ENCODE measurements at regions of chr5 and their contacts with region 1.

Region 1: DNA sequence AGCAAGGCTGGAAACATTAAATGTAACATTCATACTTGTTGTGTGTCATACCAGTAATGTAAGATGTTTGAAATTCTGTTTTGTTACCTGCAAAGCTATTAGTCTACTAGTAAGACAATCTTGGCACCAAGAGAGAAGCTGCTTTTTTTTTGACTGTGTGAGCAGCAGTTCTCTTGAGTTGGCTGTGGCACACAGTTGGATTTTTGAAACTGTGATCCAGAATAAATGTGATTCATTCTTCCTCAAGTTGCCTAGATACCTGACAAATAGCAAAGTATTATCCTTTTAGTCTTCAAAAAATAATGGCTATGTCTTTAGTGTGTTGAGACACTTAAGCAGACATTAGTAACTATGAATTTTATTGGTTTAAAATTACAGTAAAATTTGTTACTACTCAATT is 57.2 kb upstream of the HAPLN1 start:
- DNase-seq: peak; percentile 20
- H3K4me3 ChIP-seq: no peak overlapping the region
- H3K27ac ChIP-seq: peak overlapping the region; percentile 16
- H3K4me1 ChIP-seq: peaks cover 27% of the 10 kb centered on the region
- H3K27me3 ChIP-seq: no peaks in the 10 kb centered on the region
- CTCF ChIP-seq: no peak
- POLR2A ChIP-seq: no peak

Region 2: DNA sequence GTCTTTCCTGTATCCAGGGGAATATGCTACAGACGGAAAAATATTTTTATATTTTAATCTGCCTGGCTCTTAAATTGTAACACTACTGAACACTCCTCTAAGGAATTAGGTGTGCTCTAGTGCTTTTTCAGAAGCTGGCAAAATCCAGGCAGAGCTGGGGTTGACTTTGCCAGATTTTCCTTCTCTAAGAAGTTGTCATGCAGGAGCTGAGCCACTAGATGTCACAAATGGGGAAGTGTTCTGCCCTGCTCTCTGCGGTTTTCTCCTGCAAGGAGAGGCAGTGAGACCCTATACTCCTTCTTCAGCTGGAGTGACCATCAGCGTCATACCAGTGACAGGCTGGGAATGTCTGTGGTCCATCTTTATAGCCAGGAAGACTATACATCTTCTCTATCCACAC is 169.7 kb before region 1 on chr5:
- CTCF ChIA-PET with region 1: no interaction called
- POLR2A ChIA-PET with region 1: no interaction called
- dilution Hi-C with region 1: no loop called
- intact Hi-C with region 1: no loop called
- DNase-seq: peak; percentile 55
- H3K4me3 ChIP-seq: no peak overlapping the region
- H3K27ac ChIP-seq: no peak overlapping the region
- H3K4me1 ChIP-seq: no peaks in the 10 kb centered on the region
- H3K27me3 ChIP-seq: no peaks in the 10 kb centered on the region
- CTCF ChIP-seq: peak; percentile 26 to 70
- POLR2A ChIP-seq: no peak

Region 3: DNA sequence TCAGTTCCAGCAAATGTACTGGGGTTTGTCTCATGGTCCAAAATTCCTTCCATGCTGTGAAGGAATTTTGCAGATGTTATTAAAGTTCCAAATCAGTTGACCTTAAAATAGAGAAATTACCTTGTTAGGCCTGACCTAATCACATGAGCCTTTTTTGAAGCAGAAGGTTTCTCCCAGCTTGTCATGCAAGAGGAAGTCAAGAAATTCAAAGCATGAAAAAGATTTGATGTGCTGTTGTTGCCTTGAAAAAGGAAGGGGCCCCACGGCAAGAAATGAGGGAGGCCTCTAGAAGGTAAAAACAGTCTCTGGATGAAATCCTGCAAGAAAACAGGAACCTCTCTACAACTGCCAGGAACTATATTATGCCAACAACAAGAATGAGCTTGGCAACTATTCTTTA is 33.0 kb before region 1 on chr5:
- CTCF ChIA-PET with region 1: no interaction called
- POLR2A ChIA-PET with region 1: no interaction called
- dilution Hi-C with region 1: no loop called
- intact Hi-C with region 1: no loop called
- DNase-seq: peak; percentile 79
- H3K4me3 ChIP-seq: no peak overlapping the region
- H3K27ac ChIP-seq: no peak overlapping the region
- H3K4me1 ChIP-seq: no peaks in the 10 kb centered on the region
- H3K27me3 ChIP-seq: no peaks in the 10 kb centered on the region
- CTCF ChIP-seq: no peak
- POLR2A ChIP-seq: no peak

Region 4: DNA sequence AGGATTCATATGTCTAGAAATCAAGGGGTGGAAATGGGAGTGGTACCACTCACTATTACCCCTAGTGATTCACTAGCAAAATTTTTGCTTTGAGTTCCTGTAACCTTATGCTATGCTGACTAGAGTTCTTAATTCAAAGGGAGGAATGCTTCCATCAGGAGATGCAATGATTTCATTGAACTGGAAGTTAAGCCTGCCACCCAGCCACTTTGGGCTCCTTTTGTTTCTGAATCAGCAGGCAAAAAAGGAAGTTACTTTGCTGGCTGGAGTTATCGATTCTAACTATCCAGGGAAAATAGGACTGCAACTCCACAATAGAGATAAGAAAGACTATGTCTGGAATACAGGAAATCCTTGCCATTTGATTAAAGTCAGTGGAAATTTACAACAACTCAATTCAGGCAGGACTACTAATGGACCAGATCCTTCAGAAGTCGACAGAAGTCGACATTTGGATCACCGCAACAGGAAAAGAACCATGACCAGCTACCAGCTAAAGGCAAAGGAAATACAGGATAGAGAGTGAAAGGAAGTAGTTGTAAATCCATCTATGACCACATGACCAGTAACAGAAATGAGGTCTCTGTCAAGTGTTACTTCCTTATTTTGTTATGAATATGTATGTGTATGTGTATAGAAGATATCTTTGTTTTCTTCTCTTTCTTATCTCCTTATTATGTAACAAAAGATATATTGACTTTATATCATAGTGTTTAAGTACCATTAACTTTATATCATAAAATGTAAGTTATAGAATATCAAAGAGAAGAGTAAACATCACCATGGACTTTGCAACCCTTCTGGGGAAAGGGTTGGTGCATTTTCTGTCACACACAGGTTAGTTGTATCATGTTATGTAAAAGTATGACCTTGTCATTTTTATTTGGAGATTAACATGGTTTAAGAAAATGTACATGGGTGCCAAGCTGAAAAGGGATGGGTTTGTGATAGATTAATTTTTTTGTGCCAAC is 141.5 kb after region 1 on chr5:
- CTCF ChIA-PET with region 1: no interaction called
- POLR2A ChIA-PET with region 1: no interaction called
- dilution Hi-C with region 1: no loop called
- intact Hi-C with region 1: loop called (anchors 2 kb)
- DNase-seq: peak; percentile 89
- H3K4me3 ChIP-seq: peak overlapping the region in 1 of 3 experiments; percentile 23
- H3K27ac ChIP-seq: peak overlapping the region; percentile 64
- H3K4me1 ChIP-seq: peaks cover 30% of the 10 kb centered on the region
- H3K27me3 ChIP-seq: peaks cover 0 to 3% of the 10 kb centered on the region in 2 experiments
- CTCF ChIP-seq: no peak
- POLR2A ChIP-seq: no peak